Activated CD8-positive, alpha-beta T cell treated with anti-CD3 and anti-CD28 coated beads, Interleukin-2, amount 10 ng/mL, durations not matched to agents 7 days and 5 days (primary cell): ENCODE measurements at regions of chr4 and their contacts with region 1.

Region 1: DNA sequence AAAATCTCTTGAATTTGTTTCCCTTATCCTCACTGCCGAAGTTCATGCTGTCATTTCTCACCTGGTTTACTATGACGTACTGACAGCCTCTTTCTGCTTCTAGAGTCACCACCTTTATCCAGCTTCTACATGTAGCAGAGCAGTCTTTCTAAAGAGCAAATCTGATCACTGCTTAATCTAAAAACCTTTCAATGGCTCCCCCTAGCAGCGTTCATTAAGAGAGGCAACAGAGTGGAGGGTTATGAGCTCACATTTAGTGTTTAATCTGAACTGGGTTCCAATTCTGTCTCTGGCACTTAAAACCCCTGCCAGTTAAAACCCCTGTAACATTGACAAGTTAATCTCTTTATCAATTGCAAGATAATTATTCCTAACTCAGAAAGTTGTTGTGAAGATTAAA is 4.4 kb downstream of the RBPJ start:
- DNase-seq: peak; percentile 57
- ATAC-seq: peak; percentile 23
- H3K4me3 Mint-ChIP-seq: no peak overlapping the region
- H3K27ac Mint-ChIP-seq: no peak overlapping the region
- H3K4me1 Mint-ChIP-seq: peaks cover 39% of the 10 kb centered on the region
- H3K27me3 Mint-ChIP-seq: no peaks in the 10 kb centered on the region

Region 2: GRCh38 chr4:26028793-26029567 is 296.2 kb before region 1 on chr4:
- CTCF ChIA-PET with region 1: interaction called, 40 read pairs
- POLR2A ChIA-PET with region 1: interaction called, 3 read pairs
- DNase-seq: peak; percentile 75
- ATAC-seq: peak; percentile 94
- H3K4me3 Mint-ChIP-seq: no peak overlapping the region
- H3K27ac Mint-ChIP-seq: no peak overlapping the region
- H3K4me1 Mint-ChIP-seq: peaks cover 2% of the 10 kb centered on the region
- H3K27me3 Mint-ChIP-seq: peaks cover 2% of the 10 kb centered on the region

Region 3: GRCh38 chr4:26069218-26069617 is 256.0 kb before region 1 on chr4:
- CTCF ChIA-PET with region 1: interaction called, 10 read pairs
- POLR2A ChIA-PET with region 1: no interaction called
- DNase-seq: no peak
- ATAC-seq: peak; percentile 68
- H3K4me3 Mint-ChIP-seq: no peak overlapping the region
- H3K27ac Mint-ChIP-seq: no peak overlapping the region
- H3K4me1 Mint-ChIP-seq: peaks cover 3% of the 10 kb centered on the region
- H3K27me3 Mint-ChIP-seq: peaks cover 9% of the 10 kb centered on the region

Region 4: GRCh38 chr4:26081795-26082498 is 243.2 kb before region 1 on chr4:
- CTCF ChIA-PET with region 1: interaction called, 18 read pairs
- POLR2A ChIA-PET with region 1: no interaction called
- DNase-seq: no peak
- ATAC-seq: peak; percentile 63
- H3K4me3 Mint-ChIP-seq: no peak overlapping the region
- H3K27ac Mint-ChIP-seq: peak overlapping the region; percentile 41
- H3K4me1 Mint-ChIP-seq: peaks cover 51% of the 10 kb centered on the region
- H3K27me3 Mint-ChIP-seq: no peaks in the 10 kb centered on the region

Region 5: DNA sequence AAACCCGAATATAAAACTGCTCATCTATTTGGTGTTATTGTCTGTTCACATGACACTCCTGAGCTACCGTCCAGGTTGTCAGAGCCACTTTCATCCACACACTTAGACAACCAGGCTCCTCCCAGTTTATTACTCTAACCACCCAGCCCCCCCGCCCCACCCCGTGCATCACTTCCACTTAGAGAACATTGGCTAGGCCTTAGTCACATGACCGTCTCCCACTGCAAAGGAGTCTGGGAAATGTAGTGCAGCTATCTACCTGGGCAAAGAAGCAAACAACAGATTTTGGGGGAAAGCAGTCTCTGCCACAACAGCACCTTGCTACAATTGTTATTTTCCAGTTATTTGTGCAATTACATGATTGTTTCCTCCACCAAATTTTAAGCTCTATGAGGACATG is 62.0 kb before region 1 on chr4:
- CTCF ChIA-PET with region 1: no interaction called
- POLR2A ChIA-PET with region 1: no interaction called
- DNase-seq: no peak
- ATAC-seq: no peak
- H3K4me3 Mint-ChIP-seq: no peak overlapping the region
- H3K27ac Mint-ChIP-seq: no peak overlapping the region
- H3K4me1 Mint-ChIP-seq: no peaks in the 10 kb centered on the region
- H3K27me3 Mint-ChIP-seq: peaks cover 25% of the 10 kb centered on the region

Region 6: GRCh38 chr4:26410385-26411293 is 85.4 kb after region 1 on chr4:
- CTCF ChIA-PET with region 1: interaction called, 204 read pairs
- POLR2A ChIA-PET with region 1: interaction called, 5 read pairs
- DNase-seq: peak; percentile 65
- ATAC-seq: peak; percentile 67
- H3K4me3 Mint-ChIP-seq: no peak overlapping the region
- H3K27ac Mint-ChIP-seq: no peak overlapping the region
- H3K4me1 Mint-ChIP-seq: peaks cover 5% of the 10 kb centered on the region
- H3K27me3 Mint-ChIP-seq: no peaks in the 10 kb centered on the region

Region 7: DNA sequence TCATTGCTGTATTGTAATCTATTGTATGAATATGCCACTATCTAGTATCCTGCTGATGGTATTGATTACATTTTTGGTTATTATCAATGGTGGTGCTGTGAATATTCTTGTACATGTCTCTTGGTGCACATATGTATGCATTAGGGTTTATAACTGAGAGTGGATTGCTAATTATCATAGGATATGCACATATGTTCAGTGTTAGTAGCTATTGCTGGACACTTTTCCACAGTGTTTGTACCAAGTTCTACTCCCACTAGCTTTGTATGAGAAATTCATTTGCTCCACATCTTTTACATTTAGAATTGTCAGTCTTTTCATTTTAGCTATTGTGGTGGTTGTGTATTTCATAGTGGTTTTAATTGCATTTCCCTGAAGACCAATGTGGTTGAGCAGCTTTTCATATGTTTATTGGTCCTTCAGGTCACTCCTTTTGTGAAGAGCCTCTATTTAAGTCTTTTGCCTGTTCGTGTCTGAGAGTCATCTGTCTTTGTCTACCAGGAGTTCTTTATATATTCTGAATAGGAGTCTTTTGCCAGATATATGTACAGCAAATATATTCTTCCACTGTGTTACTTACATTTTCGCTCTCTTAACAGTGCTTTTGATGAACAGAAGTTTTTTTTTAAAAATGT is 345.8 kb after region 1 on chr4:
- CTCF ChIA-PET with region 1: no interaction called
- POLR2A ChIA-PET with region 1: no interaction called
- DNase-seq: no peak
- ATAC-seq: no peak
- H3K4me3 Mint-ChIP-seq: no peak overlapping the region
- H3K27ac Mint-ChIP-seq: no peak overlapping the region
- H3K4me1 Mint-ChIP-seq: no peaks in the 10 kb centered on the region
- H3K27me3 Mint-ChIP-seq: no peaks in the 10 kb centered on the region